ENCODE measurements at regions of chr21 and their contacts with region 1.

Region 1: DNA sequence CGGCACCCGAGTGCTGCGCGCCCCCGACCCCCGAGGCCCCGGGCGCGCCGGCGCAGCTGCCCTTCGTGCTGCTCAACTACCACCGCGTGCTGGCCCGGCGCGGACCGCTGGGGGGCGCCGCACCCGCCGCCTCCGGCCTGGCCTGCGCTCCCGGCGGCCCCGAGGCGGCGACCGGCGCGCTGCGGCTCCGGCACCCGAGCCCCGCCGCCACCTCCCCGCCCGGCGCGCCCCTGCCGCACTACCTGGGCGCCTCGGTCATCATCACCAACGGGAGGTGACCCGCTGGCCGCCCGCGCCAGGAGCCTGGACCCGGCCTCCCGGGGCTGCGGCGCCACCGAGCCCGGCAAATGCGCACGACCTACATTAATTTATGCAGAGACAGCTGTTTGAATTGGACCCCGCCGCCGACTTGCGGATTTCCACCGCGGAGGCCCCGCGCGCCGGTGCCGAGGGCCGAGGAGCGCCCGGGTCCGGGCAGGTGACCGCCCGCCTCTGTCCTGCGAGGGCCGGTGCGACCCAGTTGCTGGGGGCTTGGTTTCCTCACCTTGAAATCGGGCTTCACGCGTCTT is 49.0 kb downstream of the SIM2 start:
- DNase-seq: no peak
- ATAC-seq: peak; percentile 67

Region 2: DNA sequence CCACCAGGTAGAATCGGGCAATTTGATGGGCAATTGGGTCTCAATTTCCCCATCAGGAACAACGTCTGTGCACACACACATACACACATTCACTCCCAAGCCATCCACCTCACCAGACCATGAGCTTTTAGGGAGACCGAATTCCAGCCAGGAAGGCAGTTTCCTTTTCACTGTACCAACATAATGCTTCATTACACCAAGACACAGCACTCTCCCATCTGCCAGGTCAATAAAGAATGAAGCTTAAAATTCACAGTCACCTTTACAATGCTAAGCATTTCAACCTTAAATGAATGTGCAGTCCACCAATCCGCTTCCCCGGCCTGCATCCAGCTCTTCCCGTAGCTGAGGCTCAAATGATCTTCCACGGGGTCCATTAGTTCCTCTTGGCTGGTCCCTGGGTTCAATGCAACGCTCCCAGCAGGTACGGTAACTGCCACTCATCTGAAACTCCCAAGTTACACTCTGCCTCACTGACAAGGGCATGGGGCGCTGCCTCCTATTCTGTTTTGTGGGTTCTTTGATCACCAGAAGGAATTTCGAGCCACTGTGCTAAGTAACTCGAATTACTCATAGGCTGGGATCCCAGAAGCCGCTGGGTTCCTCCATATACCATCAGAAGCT is 56.0 kb after region 1 on chr21:
- intact Hi-C with region 1: loop called (anchors 5 kb)
- DNase-seq: no peak
- ATAC-seq: no peak

Region 3: GRCh38 chr21:36854391-36854790 is 106.5 kb after region 1 on chr21:
- intact Hi-C with region 1: loop called (anchors 5 kb)
- DNase-seq: no peak
- ATAC-seq: peak; percentile 56

Region 4: GRCh38 chr21:36917471-36918158 is 169.7 kb after region 1 on chr21:
- intact Hi-C with region 1: loop called (anchors 5 kb)
- DNase-seq: no peak
- ATAC-seq: peak; percentile 66

Measured in Right ventricle myocardium inferior (tissue), 1 donor.